ENCODE measurements at regions of chr14 and their contacts with region 1.

Region 1: GRCh38 chr14:32076278-32077080 is 625 bp upstream of the ARHGAP5 start:
- DNase-seq: peak; percentile 86 to 97 (median 94)
- H3K4me3 ChIP-seq: peak overlapping the region; percentile 77 to 99 (median 92)
- H3K27ac ChIP-seq: peak overlapping the region; percentile 92 to 100 (median 99)
- H3K27me3 ChIP-seq: no peaks in the 10 kb centered on the region
- CTCF ChIP-seq: peak in 2 of 56 donors; percentile 6 to 8

Region 2: DNA sequence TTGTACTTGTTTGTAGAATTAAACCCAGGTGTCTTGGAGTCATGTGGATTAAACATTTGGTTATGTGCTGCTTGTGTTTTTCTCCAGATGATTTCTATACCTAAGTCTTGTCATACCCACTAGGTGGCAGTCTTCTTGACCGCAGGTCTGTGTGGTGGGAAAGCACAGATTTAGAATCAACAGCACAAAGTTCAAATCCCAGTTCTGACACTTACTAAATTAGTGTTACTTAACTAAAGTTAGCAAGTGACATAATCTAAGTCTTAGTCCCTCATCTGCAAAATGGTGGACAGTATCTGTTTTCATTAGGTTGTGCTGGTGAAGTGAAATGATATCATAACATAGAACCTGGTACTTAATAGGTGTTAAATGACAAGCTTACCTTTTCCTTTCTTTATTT is 150.4 kb before region 1 on chr14:
- intact Hi-C with region 1: loop called (anchors 10 kb)
- DNase-seq: no peak
- H3K4me3 ChIP-seq: no peak overlapping the region
- H3K27ac ChIP-seq: peak overlapping the region in 38 of 59 donors; percentile 3 to 87 (median 54)
- H3K27me3 ChIP-seq: no peaks in the 10 kb centered on the region
- CTCF ChIP-seq: peak; percentile 19 to 71 (median 51)

Region 3: GRCh38 chr14:32202998-32203882 is 126.8 kb after region 1 on chr14 and contains the start of gene RNU6-8:
- intact Hi-C with region 1: loop called (anchors 2 kb)
- DNase-seq: peak; percentile 84 to 96 (median 86)
- H3K4me3 ChIP-seq: peak within 1 kb of the TSS; percentile 51 to 92 (median 75)
- H3K27ac ChIP-seq: peak within 1 kb of the TSS; percentile 42 to 98 (median 88)
- H3K27me3 ChIP-seq: no peaks in the 10 kb centered on the region
- CTCF ChIP-seq: peak in 12 of 56 donors; percentile 4 to 33 (median 15)
- total RNA-seq, gene RNU6-8: not detected

Region 4: DNA sequence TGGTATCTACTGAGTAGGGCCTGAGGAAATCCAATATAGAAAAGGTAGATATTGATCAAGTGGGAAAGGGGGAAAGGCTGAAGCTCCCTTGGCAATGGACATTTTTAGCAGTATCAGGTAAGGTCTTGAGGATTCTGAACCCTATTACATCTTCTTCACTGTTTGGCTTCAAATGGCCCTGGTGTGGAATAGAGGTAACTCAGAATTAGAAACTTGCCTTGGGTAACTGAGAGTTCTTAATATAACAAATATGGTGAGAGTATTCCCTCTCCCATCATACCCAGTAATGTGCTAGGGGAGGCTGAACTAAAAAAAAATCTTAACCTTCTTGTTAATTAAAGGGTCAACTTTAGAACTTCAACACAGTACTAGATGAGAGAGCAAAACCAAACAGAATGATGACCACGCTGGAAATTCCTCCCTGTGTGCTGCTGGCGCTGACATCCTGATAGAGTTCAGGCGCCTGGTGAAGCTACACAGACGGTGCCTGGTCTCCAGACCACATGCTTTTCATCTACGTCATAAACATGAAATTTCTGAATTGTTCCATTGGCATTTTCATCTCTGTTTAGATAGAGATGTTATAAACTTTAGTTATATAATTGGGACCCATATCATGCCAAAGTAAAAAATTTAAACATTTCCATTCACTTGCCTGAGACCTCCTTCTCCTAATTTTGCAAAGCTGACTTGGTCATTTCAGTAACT is 380.9 kb after region 1 on chr14:
- intact Hi-C with region 1: no loop called
- DNase-seq: no peak
- H3K4me3 ChIP-seq: no peak overlapping the region
- H3K27ac ChIP-seq: peak overlapping the region in 36 of 59 donors; percentile 1 to 74 (median 36)
- H3K27me3 ChIP-seq: no peaks in the 10 kb centered on the region
- CTCF ChIP-seq: no peak

Region 5: GRCh38 chr14:32469388-32470160 is 393.1 kb after region 1 on chr14:
- intact Hi-C with region 1: loop called (anchors 5 to 10 kb)
- DNase-seq: no peak
- H3K4me3 ChIP-seq: peak overlapping the region in 3 of 59 donors; percentile 24 to 31 (median 25)
- H3K27ac ChIP-seq: peak overlapping the region; percentile 86 to 99 (median 96)
- H3K27me3 ChIP-seq: no peaks in the 10 kb centered on the region
- CTCF ChIP-seq: peak; percentile 39 to 91 (median 74)

Region 6: DNA sequence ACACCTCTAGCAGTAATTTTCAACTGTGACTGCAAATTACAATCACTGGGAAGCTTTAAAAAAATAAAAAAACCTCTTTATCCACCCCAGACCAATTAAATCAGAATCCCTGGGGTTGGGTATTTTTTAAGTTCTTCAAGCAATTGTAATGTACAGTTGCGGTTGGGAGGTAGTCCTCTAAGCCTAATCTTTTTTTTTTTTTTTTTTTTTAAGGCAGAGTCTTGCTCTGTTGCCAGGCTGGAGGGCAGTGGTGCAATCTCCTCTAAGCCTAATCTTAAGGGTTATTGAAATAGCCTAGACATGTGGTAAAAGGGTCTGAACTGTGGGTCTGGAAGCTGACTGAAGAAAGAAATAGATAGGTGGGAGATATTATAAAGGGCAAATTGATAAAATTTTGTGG is 483.1 kb after region 1 on chr14:
- intact Hi-C with region 1: loop called (anchors 5 to 10 kb)
- DNase-seq: no peak
- H3K4me3 ChIP-seq: no peak overlapping the region
- H3K27ac ChIP-seq: peak overlapping the region in 48 of 59 donors; percentile 2 to 84 (median 59)
- H3K27me3 ChIP-seq: no peaks in the 10 kb centered on the region
- CTCF ChIP-seq: no peak